Ovary (tissue), 10 donors: ENCODE measurements at regions of chr6 and their contacts with region 1.

Region 1: DNA sequence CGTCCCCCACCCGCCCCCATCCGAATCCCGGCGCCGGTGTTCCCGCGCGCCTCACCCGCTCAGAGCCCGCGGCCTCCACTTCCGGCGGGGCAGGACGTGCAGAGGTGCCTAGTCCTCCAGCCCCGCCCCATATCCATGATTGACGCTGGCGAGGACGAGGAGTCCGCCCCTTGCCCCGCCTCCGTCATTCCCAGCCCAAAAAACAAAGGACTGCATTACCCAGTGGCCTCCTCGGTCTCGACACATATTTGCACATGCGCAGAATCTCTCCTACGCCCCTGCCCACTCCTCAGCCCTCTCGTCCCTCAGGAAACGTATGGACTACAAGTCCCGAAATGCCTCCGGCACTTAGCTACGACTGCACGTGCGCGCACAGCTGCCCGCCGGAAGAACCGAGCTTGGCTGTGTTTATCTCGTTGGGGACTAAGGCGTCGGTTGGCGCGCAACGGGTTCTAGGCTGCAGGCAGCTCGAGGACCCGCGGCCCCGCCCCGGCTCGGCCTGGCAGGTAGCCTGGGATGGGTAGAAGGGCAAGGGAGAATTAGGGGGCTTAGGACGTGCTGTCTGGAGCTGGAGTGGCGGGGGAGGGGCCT is at the starts of genes KLHDC3 and MEA1:
- DNase-seq: peak; percentile 99 to 100 (median 99)
- H3K4me3 ChIP-seq: peak within 1 kb of the TSS; percentile 73
- H3K27ac ChIP-seq: peak within 1 kb of the TSS; percentile 11 to 65
- H3K4me1 ChIP-seq: peaks cover 12% of the 10 kb centered on the region
- H3K27me3 ChIP-seq: no peaks in the 10 kb centered on the region
- CTCF ChIP-seq: no peak
- EP300 ChIP-seq: no peak
- POLR2A ChIP-seq: peak; percentile 29
- total RNA-seq, gene KLHDC3: 40.9 to 78.8 (median 55.1) TPM
- total RNA-seq, gene MEA1: 48.2 to 69.8 (median 60.1) TPM

Region 2: GRCh38 chr6:42901536-42901957 is 112.4 kb before region 1 on chr6:
- intact Hi-C with region 1: loop called in 2 of 4 experiments (anchors 10 kb)
- DNase-seq: peak; percentile 71 to 80 (median 78)
- H3K4me3 ChIP-seq: no peak overlapping the region
- H3K27ac ChIP-seq: no peak overlapping the region
- H3K4me1 ChIP-seq: no peaks in the 10 kb centered on the region
- H3K27me3 ChIP-seq: no peaks in the 10 kb centered on the region
- CTCF ChIP-seq: peak; percentile 87 to 91 (median 90)
- EP300 ChIP-seq: no peak
- POLR2A ChIP-seq: no peak

Region 3: GRCh38 chr6:42915732-42916131 is 98.2 kb before region 1 on chr6 and contains the start of gene PTCRA:
- intact Hi-C with region 1: no loop called
- DNase-seq: no peak
- H3K4me3 ChIP-seq: no peak within 1 kb of the TSS
- H3K27ac ChIP-seq: no peak within 1 kb of the TSS
- H3K4me1 ChIP-seq: peaks cover 4% of the 10 kb centered on the region
- H3K27me3 ChIP-seq: no peaks in the 10 kb centered on the region
- CTCF ChIP-seq: no peak
- EP300 ChIP-seq: no peak
- POLR2A ChIP-seq: no peak
- total RNA-seq, gene PTCRA: 0.55 TPM in 1 of 7 donors, not detected in the others

Region 4: GRCh38 chr6:43053545-43054205 is 39.7 kb after region 1 on chr6 and contains the start of gene CUL7:
- intact Hi-C with region 1: no loop called
- DNase-seq: peak; percentile 92 to 95 (median 93)
- H3K4me3 ChIP-seq: peak within 1 kb of the TSS; percentile 79
- H3K27ac ChIP-seq: peak within 1 kb of the TSS; percentile 66 to 96
- H3K4me1 ChIP-seq: peaks cover 19% of the 10 kb centered on the region
- H3K27me3 ChIP-seq: no peaks in the 10 kb centered on the region
- CTCF ChIP-seq: no peak
- EP300 ChIP-seq: no peak
- POLR2A ChIP-seq: peak; percentile 77
- total RNA-seq, gene CUL7: 15.6 to 29.1 (median 25.0) TPM